Mammary epithelial cell (primary cell): ENCODE measurements at regions of chr9 and their contacts with region 1.

Region 1: DNA sequence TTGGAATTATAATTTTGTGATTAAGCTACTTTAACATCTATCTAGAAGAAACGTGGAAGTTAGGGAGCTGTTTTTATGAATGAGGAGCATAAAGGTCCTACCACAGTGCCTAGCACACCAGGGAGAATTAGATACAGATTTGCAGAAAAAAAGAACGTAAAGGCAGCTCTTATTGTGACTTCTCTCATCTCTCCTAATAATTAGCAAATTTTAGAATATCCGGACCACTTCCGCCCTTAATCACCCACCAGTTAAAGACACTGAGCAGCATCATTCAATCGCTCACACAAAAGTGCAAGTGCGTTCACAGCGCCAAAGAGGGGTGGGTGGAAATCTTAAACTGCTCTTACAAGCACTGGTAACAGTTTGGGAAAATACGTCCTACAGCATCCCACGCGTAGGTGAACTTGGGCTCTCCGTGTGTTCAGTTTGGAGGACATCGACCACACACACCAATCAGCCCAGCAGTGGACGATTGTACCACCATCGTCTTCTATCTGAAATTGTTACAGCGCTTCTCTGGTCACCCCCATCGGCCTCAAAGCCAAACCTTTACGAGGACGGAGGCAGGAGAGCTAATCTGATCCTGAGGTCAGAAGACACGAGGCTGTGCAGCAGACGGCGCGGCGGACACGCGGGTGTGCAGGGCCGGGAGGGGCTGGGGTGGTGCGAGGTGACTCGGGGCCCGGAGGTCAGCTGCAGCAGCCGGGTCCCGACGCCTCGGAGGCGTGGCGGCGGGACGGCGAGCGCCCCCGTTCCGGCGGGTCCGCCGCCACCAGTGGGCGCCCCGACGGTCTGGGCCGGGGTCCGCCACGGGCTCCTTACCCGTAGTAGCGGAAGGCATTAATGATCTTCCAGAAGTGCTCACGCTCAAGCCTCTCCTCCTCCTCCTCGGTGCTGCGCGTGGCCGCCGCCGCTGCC is 646 bp downstream of the CARNMT1 start:
- DNase-seq: peak; percentile 39
- H3K4me3 ChIP-seq: peak overlapping the region; percentile 74 to 94 (median 84)
- H3K27ac ChIP-seq: peak overlapping the region; percentile 85
- H3K4me1 ChIP-seq: no peaks in the 10 kb centered on the region
- H3K27me3 ChIP-seq: no peaks in the 10 kb centered on the region
- CTCF ChIP-seq: no peak

Region 2: DNA sequence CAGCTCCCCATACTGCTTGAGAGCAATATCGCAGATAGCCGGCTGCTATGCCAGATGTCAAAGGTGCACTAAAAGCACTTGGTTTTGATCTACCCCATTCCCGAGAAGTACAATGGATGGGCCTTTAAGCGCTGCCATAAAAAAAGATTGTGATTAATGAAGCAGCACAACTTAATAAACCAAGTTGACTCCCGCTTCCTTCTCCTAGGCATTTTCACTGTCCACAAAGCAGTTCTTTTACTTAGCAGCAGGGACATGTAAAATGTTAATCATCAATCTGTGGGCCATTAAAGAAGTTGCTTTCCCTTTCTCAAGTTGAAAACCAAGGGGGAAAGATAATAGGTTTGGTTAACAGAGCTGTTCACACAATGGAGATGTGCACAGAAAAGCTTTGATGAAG is 316.1 kb before region 1 on chr9:
- CTCF ChIA-PET with region 1: no interaction called
- dilution Hi-C with region 1: no loop called
- in situ Hi-C with region 1: no loop called
- intact Hi-C with region 1: no loop called
- DNase-seq: no peak
- H3K4me3 ChIP-seq: no peak overlapping the region
- H3K27ac ChIP-seq: no peak overlapping the region
- H3K4me1 ChIP-seq: no peaks in the 10 kb centered on the region
- H3K27me3 ChIP-seq: no peaks in the 10 kb centered on the region
- CTCF ChIP-seq: no peak

Region 3: DNA sequence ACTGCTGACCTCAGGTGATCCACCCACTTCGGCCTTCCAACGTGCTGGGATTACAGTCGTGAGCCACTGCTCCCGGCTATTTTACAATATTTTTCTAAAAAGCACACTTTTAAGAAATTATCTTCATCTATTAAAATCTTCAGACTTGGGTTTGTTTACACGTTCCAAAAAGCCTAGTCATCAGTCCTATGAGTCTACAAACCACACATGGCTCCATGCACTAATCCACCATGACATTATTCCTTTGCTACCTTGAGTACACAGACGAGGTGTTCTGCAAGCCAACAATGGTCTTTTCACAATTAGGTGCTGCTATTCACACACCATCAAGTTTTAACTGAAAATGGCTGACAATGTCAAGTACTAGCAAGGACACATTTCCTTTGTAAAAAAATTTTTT is 180.7 kb before region 1 on chr9:
- CTCF ChIA-PET with region 1: no interaction called
- dilution Hi-C with region 1: no loop called
- in situ Hi-C with region 1: no loop called
- intact Hi-C with region 1: no loop called
- DNase-seq: no peak
- H3K4me3 ChIP-seq: no peak overlapping the region
- H3K27ac ChIP-seq: no peak overlapping the region
- H3K4me1 ChIP-seq: no peaks in the 10 kb centered on the region
- H3K27me3 ChIP-seq: no peaks in the 10 kb centered on the region
- CTCF ChIP-seq: no peak

Region 4: GRCh38 chr9:75064307-75065025 is 37.0 kb after region 1 on chr9:
- CTCF ChIA-PET with region 1: interaction called, 7 read pairs
- dilution Hi-C with region 1: no loop called
- in situ Hi-C with region 1: no loop called
- intact Hi-C with region 1: loop called (anchors 5 kb)
- DNase-seq: peak; percentile 32
- H3K4me3 ChIP-seq: no peak overlapping the region
- H3K27ac ChIP-seq: no peak overlapping the region
- H3K4me1 ChIP-seq: peaks cover 10% of the 10 kb centered on the region
- H3K27me3 ChIP-seq: no peaks in the 10 kb centered on the region
- CTCF ChIP-seq: no peak

Region 5: GRCh38 chr9:75088260-75088905 is 60.9 kb after region 1 on chr9 and contains the start of gene OSTF1:
- CTCF ChIA-PET with region 1: interaction called, 4 read pairs
- dilution Hi-C with region 1: no loop called
- in situ Hi-C with region 1: no loop called
- intact Hi-C with region 1: loop called (anchors 1 kb)
- DNase-seq: peak; percentile 97
- H3K4me3 ChIP-seq: peak within 1 kb of the TSS; percentile 95 to 96 (median 96)
- H3K27ac ChIP-seq: peak within 1 kb of the TSS; percentile 92
- H3K4me1 ChIP-seq: peaks cover 29% of the 10 kb centered on the region
- H3K27me3 ChIP-seq: no peaks in the 10 kb centered on the region
- CTCF ChIP-seq: no peak
- total RNA-seq, gene OSTF1: 31.8 to 53.1 TPM

Region 6: DNA sequence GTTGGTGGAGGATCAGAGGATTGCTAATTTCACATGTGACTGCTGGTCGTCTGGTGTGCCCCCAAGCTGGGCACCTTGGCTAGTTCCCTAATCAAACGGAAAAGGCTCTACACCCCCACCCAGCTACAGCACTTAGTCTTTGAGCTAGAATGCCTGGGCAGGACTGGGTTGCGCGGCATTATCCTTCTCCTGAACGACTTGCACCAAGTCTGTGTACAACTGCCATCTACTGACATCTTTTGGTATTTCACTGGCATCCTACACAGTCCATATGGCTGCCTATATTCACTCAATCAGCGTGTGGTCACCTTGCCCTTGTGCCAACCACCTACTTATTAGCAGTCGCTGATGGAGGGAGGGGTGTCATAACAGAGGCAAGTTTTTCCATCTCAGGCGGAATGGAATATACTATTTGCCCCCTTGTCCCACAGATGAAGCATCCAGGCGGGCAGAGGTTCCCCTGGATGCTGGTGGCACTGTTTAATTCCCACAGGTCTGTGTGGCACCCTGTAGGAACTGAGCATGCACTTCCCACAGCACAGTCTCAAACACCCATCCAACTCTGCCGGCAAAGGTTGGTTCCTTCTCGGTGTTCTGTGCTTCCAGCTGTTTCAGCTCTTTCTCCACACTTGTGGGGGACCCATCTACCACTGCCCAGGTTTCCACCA is 211.0 kb after region 1 on chr9:
- CTCF ChIA-PET with region 1: no interaction called
- dilution Hi-C with region 1: no loop called
- in situ Hi-C with region 1: no loop called
- intact Hi-C with region 1: loop called (anchors 5 kb)
- DNase-seq: peak; percentile 71
- H3K4me3 ChIP-seq: no peak overlapping the region
- H3K27ac ChIP-seq: peak overlapping the region; percentile 12
- H3K4me1 ChIP-seq: peaks cover 20% of the 10 kb centered on the region
- H3K27me3 ChIP-seq: no peaks in the 10 kb centered on the region
- CTCF ChIP-seq: peak; percentile 73 to 75